ENCODE measurements at regions of chr1 and their contacts with region 1.

Region 1: GRCh38 chr1:167803358-167804207 is 81.8 kb downstream of the MPZL1 start:
- DNase-seq: peak; percentile 70 to 93 (median 78)
- ATAC-seq: peak; percentile 79
- H3K4me3 ChIP-seq: no peak overlapping the region
- H3K4me3 Mint-ChIP-seq: peak overlapping the region; percentile 60
- H3K27ac ChIP-seq: no peak overlapping the region
- H3K27ac Mint-ChIP-seq: no peak overlapping the region
- H3K4me1 ChIP-seq: peaks cover 21% of the 10 kb centered on the region
- H3K4me1 Mint-ChIP-seq: peaks cover 30% of the 10 kb centered on the region
- H3K27me3 ChIP-seq: no peaks in the 10 kb centered on the region
- H3K27me3 Mint-ChIP-seq: no peaks in the 10 kb centered on the region
- CTCF ChIP-seq: peak; percentile 95

Region 2: DNA sequence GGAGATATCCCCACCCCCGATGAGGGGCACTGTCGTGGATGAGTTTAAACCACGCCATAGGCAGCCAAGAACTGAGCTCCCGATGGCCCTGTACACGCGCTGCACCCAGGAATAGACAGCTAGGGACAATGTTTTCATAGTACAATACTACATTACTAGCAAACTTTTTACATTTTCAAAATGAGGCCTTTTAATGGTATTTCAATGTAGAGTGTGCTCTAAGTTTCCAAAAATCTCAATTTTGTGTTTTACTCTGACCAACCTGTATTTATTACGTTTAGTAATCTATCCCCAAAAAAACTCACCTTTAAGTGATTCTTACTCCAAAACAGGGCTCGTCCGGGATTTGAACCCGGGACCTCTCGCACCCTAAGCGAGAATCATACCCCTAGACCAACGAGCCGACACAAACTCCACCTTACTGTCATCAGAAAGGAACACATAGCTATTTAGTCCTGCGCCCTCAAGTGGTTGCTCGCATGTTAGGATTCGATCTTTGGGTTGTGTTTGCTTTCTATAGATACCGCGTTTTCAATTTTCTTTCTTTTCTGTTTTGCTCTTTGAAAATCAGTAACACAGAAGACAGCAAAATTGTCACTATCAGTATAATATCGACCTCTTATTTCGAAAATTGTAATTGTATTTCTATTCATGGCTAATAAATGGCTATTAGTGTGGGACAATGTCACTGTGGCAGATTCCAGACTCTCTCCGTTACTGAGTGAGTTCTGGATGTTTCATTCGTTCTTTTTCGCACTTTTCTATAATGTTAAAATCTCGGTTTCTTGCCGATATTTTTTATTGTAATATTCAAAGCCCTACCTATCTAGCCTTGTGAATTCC is 88.2 kb before region 1 on chr1:
- CTCF ChIA-PET with region 1: no interaction called
- POLR2A ChIA-PET with region 1: no interaction called
- intact Hi-C with region 1: loop called (anchors 1 to 5 kb)
- DNase-seq: peak; percentile 75 to 94 (median 84)
- ATAC-seq: peak; percentile 59
- H3K4me3 ChIP-seq: peak overlapping the region; percentile 79
- H3K4me3 Mint-ChIP-seq: peak overlapping the region; percentile 92
- H3K27ac ChIP-seq: peak overlapping the region in 1 of 2 donors; percentile 27
- H3K27ac Mint-ChIP-seq: peak overlapping the region; percentile 87
- H3K4me1 ChIP-seq: peaks cover 39% of the 10 kb centered on the region
- H3K4me1 Mint-ChIP-seq: peaks cover 47% of the 10 kb centered on the region
- H3K27me3 ChIP-seq: no peaks in the 10 kb centered on the region
- H3K27me3 Mint-ChIP-seq: peaks cover 18% of the 10 kb centered on the region
- CTCF ChIP-seq: peak; percentile 92

Region 3: GRCh38 chr1:167899253-167899681 is 95.7 kb after region 1 on chr1:
- CTCF ChIA-PET with region 1: no interaction called
- POLR2A ChIA-PET with region 1: no interaction called
- intact Hi-C with region 1: no loop called
- DNase-seq: no peak
- ATAC-seq: no peak
- H3K4me3 ChIP-seq: no peak overlapping the region
- H3K4me3 Mint-ChIP-seq: no peak overlapping the region
- H3K27ac ChIP-seq: no peak overlapping the region
- H3K27ac Mint-ChIP-seq: no peak overlapping the region
- H3K4me1 ChIP-seq: no peaks in the 10 kb centered on the region
- H3K4me1 Mint-ChIP-seq: no peaks in the 10 kb centered on the region
- H3K27me3 ChIP-seq: no peaks in the 10 kb centered on the region
- H3K27me3 Mint-ChIP-seq: no peaks in the 10 kb centered on the region
- CTCF ChIP-seq: no peak

Measured in CD4-positive, alpha-beta T cell (primary cell).